ENCODE measurements at regions of chr20 and their contacts with region 1.

Region 1: GRCh38 chr20:24992487-24993205 is at the start of gene APMAP:
- DNase-seq: peak; percentile 87 to 98 (median 95)
- ATAC-seq: peak; percentile 94 to 96 (median 95)
- H3K4me3 ChIP-seq: peak within 1 kb of the TSS; percentile 72 to 88
- H3K4me3 Mint-ChIP-seq: peak within 1 kb of the TSS; percentile 95 to 99 (median 95)
- H3K27ac ChIP-seq: peak within 1 kb of the TSS; percentile 97
- H3K27ac Mint-ChIP-seq: peak within 1 kb of the TSS; percentile 94 to 96
- H3K4me1 ChIP-seq: peaks cover 5 to 49% of the 10 kb centered on the region in 2 experiments
- H3K4me1 Mint-ChIP-seq: peaks cover 48 to 70% (median 69%) of the 10 kb centered on the region in 3 donors
- H3K27me3 ChIP-seq: no peaks in the 10 kb centered on the region
- H3K27me3 Mint-ChIP-seq: no peaks in the 10 kb centered on the region
- total RNA-seq, gene APMAP: 32.2 to 53.0 (median 49.8) TPM

Region 2: DNA sequence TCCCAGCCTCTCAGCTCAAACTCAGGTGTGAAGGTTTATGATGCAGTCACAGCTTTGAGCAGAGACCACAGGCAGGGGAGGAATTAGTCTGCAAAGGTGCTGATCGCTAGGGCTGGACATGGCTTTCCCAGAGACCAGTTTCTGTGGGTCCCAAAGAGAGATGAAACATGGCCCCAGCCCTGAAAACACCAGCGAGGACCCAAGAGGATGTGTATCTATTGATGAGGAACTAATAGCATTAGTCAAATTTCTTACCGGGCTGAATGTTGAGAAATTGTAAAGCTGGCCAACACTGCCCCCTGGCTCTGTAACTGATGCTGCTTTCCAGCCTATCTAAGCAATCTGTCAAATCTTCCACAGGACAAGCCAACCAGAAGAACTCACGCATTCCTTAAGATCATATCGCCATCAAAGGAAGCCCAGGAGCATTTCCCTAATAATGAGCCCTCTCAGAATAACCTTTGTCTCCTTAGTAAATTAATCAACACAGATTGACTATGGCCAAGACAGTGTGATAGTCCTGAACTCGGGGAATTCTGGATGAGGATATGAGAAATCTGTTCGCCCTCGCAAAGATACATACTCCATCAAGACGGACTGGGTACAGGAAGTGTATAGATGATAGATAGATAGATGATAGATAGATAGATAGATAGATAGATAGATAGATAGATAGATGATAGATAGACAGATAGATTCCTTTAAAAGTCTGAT is 73.1 kb after region 1 on chr20:
- CTCF ChIA-PET with region 1: interaction called, 28 to 35 read pairs
- POLR2A ChIA-PET with region 1: no interaction called
- DNase-seq: peak in 34 of 35 experiments; percentile 22 to 84 (median 61)
- ATAC-seq: peak; percentile 64 to 89 (median 78)
- H3K4me3 ChIP-seq: no peak overlapping the region
- H3K4me3 Mint-ChIP-seq: no peak overlapping the region
- H3K27ac ChIP-seq: no peak overlapping the region
- H3K27ac Mint-ChIP-seq: no peak overlapping the region
- H3K4me1 ChIP-seq: peaks cover 0 to 9% of the 10 kb centered on the region in 2 experiments
- H3K4me1 Mint-ChIP-seq: peaks cover 6 to 7% (median 7%) of the 10 kb centered on the region in 3 donors
- H3K27me3 ChIP-seq: peaks cover 0 to 32% of the 10 kb centered on the region in 2 experiments
- H3K27me3 Mint-ChIP-seq: peaks cover 16 to 22% of the 10 kb centered on the region in 2 donors

Measured in T-cell (primary cell).